HCT116 (cell line): ENCODE measurements at regions of chr12 and their contacts with region 1.

Region 1: DNA sequence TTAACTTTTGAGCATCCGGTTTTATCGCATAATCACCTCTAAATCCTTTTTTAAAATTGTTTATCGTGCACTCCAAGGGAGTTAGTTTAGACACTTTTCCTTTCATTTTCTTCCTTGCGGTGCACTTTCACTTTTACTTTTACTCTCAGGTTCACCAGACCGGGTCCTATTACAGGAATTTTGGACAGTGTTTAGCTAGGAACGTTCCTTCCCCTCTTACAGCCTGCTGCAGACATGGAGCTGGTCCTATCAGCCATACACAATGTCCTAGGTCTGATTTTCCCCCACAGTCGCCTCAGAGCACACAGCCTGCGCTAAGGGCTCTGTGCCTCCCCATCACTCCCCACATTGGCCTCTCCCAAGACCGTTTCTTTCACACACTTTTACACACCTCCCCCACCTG is 103.9 kb downstream of the ALG10 start:
- DNase-seq: no peak
- ATAC-seq: no peak
- H3K4me3 ChIP-seq: no peak overlapping the region
- H3K27ac ChIP-seq: no peak overlapping the region
- H3K4me1 ChIP-seq: no peaks in the 10 kb centered on the region
- H3K27me3 ChIP-seq: no peaks in the 10 kb centered on the region; the same call in 1 of the 2 replicates
- CTCF ChIP-seq: no peak
- POLR2A ChIP-seq: no peak
- RAD21 ChIP-seq: no peak

Region 2: GRCh38 chr12:33439282-33440011 is 686.8 kb before region 1 on chr12 and contains the start of gene SYT10:
- CTCF ChIA-PET with region 1: no interaction called
- POLR2A ChIA-PET with region 1: no interaction called
- RAD21 ChIA-PET with region 1: no interaction called
- intact Hi-C with region 1: no loop called
- DNase-seq: no peak
- ATAC-seq: no peak
- H3K4me3 ChIP-seq: no peak within 1 kb of the TSS
- H3K27ac ChIP-seq: no peak within 1 kb of the TSS
- H3K4me1 ChIP-seq: no peaks in the 10 kb centered on the region
- H3K27me3 ChIP-seq: no peaks in the 10 kb centered on the region
- CTCF ChIP-seq: no peak
- POLR2A ChIP-seq: no peak
- RAD21 ChIP-seq: no peak
- total RNA-seq, gene SYT10: not detected

Region 3: DNA sequence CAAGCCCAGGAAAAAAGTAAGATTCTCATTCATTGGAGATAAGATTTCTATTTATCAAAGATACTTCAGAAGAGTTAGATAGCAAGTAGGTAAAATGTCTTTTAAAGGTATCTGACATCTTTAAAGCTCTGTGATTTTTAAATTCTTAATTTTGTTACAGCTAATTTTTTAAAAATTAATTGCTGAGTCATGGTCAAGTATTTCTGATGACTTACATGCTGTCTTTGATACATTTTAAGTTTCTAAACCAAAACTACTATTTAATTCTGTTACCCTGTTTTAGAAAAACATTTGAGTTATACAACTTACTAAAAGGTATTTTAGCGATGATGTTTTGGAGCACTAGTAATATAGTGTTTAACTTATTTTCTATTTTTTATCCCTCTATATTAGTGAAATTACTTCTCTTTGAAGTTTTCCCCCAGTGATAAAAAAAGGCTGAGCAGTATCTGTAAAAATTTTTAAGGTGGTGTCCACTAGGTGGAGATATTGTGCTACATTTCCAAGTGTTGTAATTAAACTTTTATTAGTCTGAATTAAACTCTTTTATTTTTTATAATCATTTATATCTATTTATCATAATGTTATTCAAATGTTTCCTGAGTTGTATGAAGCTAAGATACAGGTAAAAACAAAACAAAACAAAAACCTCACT is 92.5 kb before region 1 on chr12:
- CTCF ChIA-PET with region 1: no interaction called
- POLR2A ChIA-PET with region 1: no interaction called
- RAD21 ChIA-PET with region 1: no interaction called
- intact Hi-C with region 1: loop called (anchors 5 kb)
- DNase-seq: peak; percentile 13
- ATAC-seq: no peak
- H3K4me3 ChIP-seq: no peak overlapping the region
- H3K27ac ChIP-seq: no peak overlapping the region
- H3K4me1 ChIP-seq: no peaks in the 10 kb centered on the region
- H3K27me3 ChIP-seq: no peaks in the 10 kb centered on the region
- CTCF ChIP-seq: peak in 2 of 3 experiments; percentile 32 to 40; a peak in 3 of 6 replicates
- POLR2A ChIP-seq: no peak
- RAD21 ChIP-seq: peak; percentile 34; the same call in 1 of the 2 replicates

Region 4: GRCh38 chr12:34218165-34219045 is 92.2 kb after region 1 on chr12:
- CTCF ChIA-PET with region 1: interaction called, 3 read pairs
- POLR2A ChIA-PET with region 1: no interaction called
- RAD21 ChIA-PET with region 1: no interaction called
- intact Hi-C with region 1: loop called (anchors 1 kb)
- DNase-seq: peak; percentile 52
- ATAC-seq: peak; percentile 84
- H3K4me3 ChIP-seq: no peak overlapping the region
- H3K27ac ChIP-seq: no peak overlapping the region
- H3K4me1 ChIP-seq: no peaks in the 10 kb centered on the region
- H3K27me3 ChIP-seq: no peaks in the 10 kb centered on the region
- CTCF ChIP-seq: peak; percentile 70 to 84 (median 83)
- POLR2A ChIP-seq: no peak
- RAD21 ChIP-seq: peak; percentile 65

Region 5: GRCh38 chr12:34292736-34293625 is 166.7 kb after region 1 on chr12:
- CTCF ChIA-PET with region 1: no interaction called
- POLR2A ChIA-PET with region 1: no interaction called
- RAD21 ChIA-PET with region 1: no interaction called
- intact Hi-C with region 1: loop called (anchors 1 kb)
- DNase-seq: no peak
- ATAC-seq: peak; percentile 53; the same call in 1 of the 2 replicates
- H3K4me3 ChIP-seq: no peak overlapping the region
- H3K27ac ChIP-seq: no peak overlapping the region
- H3K4me1 ChIP-seq: no peaks in the 10 kb centered on the region
- H3K27me3 ChIP-seq: no peaks in the 10 kb centered on the region
- CTCF ChIP-seq: peak in 2 of 3 experiments; percentile 16 to 36; a peak in 3 of 6 replicates
- POLR2A ChIP-seq: no peak
- RAD21 ChIP-seq: peak; percentile 17; the same call in 1 of the 2 replicates

Region 6: DNA sequence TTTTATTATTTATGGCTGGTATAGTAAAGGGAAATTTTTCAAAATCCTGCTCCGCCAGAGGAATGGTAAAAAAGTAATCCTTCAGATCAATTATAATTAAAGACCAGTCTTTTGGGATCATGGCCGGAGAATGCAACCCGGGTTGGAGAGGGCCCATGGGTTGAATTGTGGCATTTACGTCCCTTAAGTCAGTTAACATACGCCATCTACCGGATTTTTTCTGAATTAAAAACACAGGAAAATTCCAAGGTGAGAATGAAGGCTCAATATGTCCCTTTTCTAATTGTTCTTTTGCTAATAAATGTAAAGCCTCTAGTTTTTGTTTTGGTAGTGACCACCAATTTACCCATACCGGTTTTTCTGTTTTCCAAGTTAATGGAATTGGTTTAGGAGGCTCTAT is 498.9 kb after region 1 on chr12:
- CTCF ChIA-PET with region 1: no interaction called
- POLR2A ChIA-PET with region 1: no interaction called
- RAD21 ChIA-PET with region 1: no interaction called
- intact Hi-C with region 1: loop called (anchors 2 kb)
- DNase-seq: peak; percentile 7
- ATAC-seq: no peak
- H3K4me3 ChIP-seq: no peak overlapping the region
- H3K27ac ChIP-seq: no peak overlapping the region
- H3K4me1 ChIP-seq: no peaks in the 10 kb centered on the region
- H3K27me3 ChIP-seq: no peaks in the 10 kb centered on the region
- CTCF ChIP-seq: peak in 2 of 3 experiments; percentile 21 to 44; a peak in 4 of 6 replicates
- POLR2A ChIP-seq: no peak
- RAD21 ChIP-seq: peak; percentile 37